GM18951 (cell line): ENCODE measurements at regions of chr7 and their contacts with region 1.

Region 1: DNA sequence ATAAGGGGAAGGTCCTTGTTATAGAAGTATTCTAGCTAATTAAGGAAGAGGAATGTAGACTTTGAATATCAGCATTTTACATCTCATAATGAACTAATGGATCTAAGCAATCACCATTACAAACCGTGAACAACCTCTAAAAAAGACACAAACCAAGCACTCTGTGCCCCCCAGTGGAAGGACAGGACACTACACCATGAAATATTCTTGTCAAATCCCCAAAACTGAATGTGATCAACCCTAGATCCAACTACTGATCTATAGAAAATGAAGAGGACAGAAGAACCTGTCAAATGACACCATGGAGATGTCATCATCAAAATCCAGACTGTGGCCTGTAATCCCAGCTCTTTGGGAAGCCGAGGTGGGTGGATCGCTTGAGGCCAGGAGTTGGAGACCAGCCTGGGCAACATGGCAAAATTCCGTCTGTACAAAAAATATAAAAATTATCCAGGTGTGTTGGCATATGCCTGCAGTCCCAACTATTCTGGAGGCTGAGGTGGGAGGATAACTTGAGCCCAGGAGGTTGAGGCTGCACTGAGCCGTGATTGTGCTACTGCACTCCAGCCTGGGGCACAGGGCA is 111.3 kb upstream of the CARD11 start:
- POLR2A ChIP-seq: no peak

Region 2: GRCh38 chr7:2863461-2864066 is 291.4 kb before region 1 on chr7:
- in situ Hi-C with region 1: loop called (anchors 10 kb)
- POLR2A ChIP-seq: peak; percentile 69

Region 3: GRCh38 chr7:2903682-2904162 is 251.3 kb before region 1 on chr7:
- in situ Hi-C with region 1: no loop called
- POLR2A ChIP-seq: no peak

Region 4: DNA sequence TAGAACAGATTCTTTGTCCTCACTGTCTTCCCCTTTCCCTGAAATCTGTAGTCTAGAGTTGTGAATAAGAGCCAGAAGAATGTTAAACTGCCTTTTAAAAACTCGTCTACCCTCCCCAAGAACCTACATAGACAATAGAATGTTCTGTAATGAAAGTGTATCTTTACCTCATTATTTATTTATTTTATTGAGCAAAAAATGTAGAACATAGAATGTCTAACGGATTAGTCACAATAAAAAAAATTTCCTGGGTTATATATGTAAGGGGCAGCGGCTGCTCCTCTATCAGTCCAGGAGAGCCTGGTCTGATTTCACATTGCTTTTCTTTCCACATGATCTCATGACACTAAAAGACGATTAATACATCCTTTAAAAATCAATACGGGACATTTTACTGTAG is 281.7 kb after region 1 on chr7:
- in situ Hi-C with region 1: no loop called
- POLR2A ChIP-seq: no peak